ENCODE measurements at regions of chr3 and their contacts with region 1.

Region 1: GRCh38 chr3:33277193-33277882 is at the start of gene FBXL2:
- DNase-seq: peak; percentile 87
- ATAC-seq: peak; percentile 93
- H3K4me3 ChIP-seq: peak within 1 kb of the TSS; percentile 74
- H3K27ac ChIP-seq: no peak within 1 kb of the TSS
- H3K4me1 ChIP-seq: peaks cover 9% of the 10 kb centered on the region
- H3K27me3 ChIP-seq: no peaks in the 10 kb centered on the region
- CTCF ChIP-seq: no peak
- total RNA-seq, gene FBXL2: 7.2 and 9.4 TPM in 2 replicates

Region 2: GRCh38 chr3:33035596-33035995 is 241.7 kb before region 1 on chr3:
- CTCF ChIA-PET with region 1: no interaction called
- POLR2A ChIA-PET with region 1: no interaction called
- intact Hi-C with region 1: no loop called
- DNase-seq: peak; percentile 84
- ATAC-seq: peak; percentile 68
- H3K4me3 ChIP-seq: no peak overlapping the region
- H3K27ac ChIP-seq: 0 out of 2 replicates have a peak overlapping the region, but pooled peaks have one; percentile 10
- H3K4me1 ChIP-seq: peaks cover 29% of the 10 kb centered on the region
- H3K27me3 ChIP-seq: no peaks in the 10 kb centered on the region
- CTCF ChIP-seq: no peak

Region 3: DNA sequence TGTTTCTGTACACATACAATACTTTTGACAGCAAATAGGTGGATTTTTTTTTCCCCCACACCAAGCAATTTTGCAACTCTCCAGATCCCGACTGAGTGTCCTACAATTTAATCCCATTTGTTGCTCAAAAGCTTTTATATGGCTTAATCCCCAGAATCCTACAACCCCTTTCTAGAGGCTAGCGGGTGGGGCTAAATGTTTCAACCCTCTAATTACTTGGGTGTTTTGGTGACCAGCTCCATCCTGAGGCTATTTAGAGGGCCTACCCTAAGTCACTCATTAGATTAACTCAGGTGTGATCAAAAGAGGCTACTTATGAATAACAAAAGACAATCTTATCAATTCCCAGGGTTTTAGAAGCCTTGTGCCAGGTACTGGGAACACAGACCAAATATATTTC is 21.1 kb before region 1 on chr3:
- CTCF ChIA-PET with region 1: no interaction called
- POLR2A ChIA-PET with region 1: no interaction called
- intact Hi-C with region 1: loop called (anchors 1 kb)
- DNase-seq: no peak
- ATAC-seq: no peak
- H3K4me3 ChIP-seq: no peak overlapping the region
- H3K27ac ChIP-seq: no peak overlapping the region
- H3K4me1 ChIP-seq: no peaks in the 10 kb centered on the region
- H3K27me3 ChIP-seq: no peaks in the 10 kb centered on the region
- CTCF ChIP-seq: no peak

Region 4: DNA sequence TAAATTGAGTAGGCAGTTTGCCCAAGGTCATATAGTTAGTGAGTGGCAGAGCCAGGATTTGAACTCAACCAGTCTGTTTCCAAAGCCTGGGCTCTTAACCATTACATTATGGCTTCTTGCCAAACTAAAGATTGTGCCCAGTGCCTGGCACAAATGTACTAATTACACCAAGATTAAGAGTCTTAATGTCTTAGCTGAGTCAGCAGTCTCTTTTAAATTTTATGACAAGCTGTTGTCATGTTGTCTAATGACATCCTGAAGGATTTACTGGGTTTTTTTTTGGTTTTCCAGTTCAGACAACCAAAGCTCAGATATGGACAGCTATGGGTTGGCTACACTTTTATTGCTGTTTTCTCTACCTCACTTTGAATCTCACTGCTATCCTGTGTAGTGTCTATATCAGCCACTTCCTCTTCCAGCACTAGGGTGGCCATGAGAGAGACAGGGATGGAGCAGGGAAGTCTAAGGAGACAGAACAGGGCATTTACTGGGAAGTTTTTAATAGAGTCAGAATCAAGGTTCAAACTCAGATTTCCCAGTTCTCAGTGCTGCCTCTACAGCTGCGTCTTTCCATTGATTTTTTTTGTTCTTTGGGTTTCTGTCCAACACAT is 10.4 kb after region 1 on chr3:
- CTCF ChIA-PET with region 1: no interaction called
- POLR2A ChIA-PET with region 1: no interaction called
- intact Hi-C with region 1: no loop called
- DNase-seq: no peak
- ATAC-seq: no peak
- H3K4me3 ChIP-seq: no peak overlapping the region
- H3K27ac ChIP-seq: no peak overlapping the region
- H3K4me1 ChIP-seq: no peaks in the 10 kb centered on the region
- H3K27me3 ChIP-seq: no peaks in the 10 kb centered on the region
- CTCF ChIP-seq: no peak

Region 5: GRCh38 chr3:33597257-33597689 is 319.9 kb after region 1 on chr3:
- CTCF ChIA-PET with region 1: no interaction called
- POLR2A ChIA-PET with region 1: no interaction called
- intact Hi-C with region 1: no loop called
- DNase-seq: no peak
- ATAC-seq: peak; percentile 14; the same call in 1 of the 2 replicates
- H3K4me3 ChIP-seq: no peak overlapping the region
- H3K27ac ChIP-seq: no peak overlapping the region
- H3K4me1 ChIP-seq: no peaks in the 10 kb centered on the region
- H3K27me3 ChIP-seq: no peaks in the 10 kb centered on the region
- CTCF ChIP-seq: no peak

Region 6: GRCh38 chr3:33699275-33699674 is 421.9 kb after region 1 on chr3:
- CTCF ChIA-PET with region 1: no interaction called
- POLR2A ChIA-PET with region 1: no interaction called
- intact Hi-C with region 1: no loop called
- DNase-seq: no peak
- ATAC-seq: no peak
- H3K4me3 ChIP-seq: no peak overlapping the region
- H3K27ac ChIP-seq: no peak overlapping the region
- H3K4me1 ChIP-seq: no peaks in the 10 kb centered on the region
- H3K27me3 ChIP-seq: no peaks in the 10 kb centered on the region
- CTCF ChIP-seq: no peak